ENCODE measurements at regions of chrX and their contacts with region 1.

Region 1: GRCh38 chrX:49269010-49269767 is 404 bp upstream of the PPP1R3F start:
- DNase-seq: peak; percentile 72 to 97 (median 94)
- ATAC-seq: peak; percentile 89
- H3K4me3 ChIP-seq: peak overlapping the region; percentile 96
- H3K4me3 Mint-ChIP-seq: peak overlapping the region; percentile 91 to 100 (median 96)
- H3K27ac ChIP-seq: peak overlapping the region; percentile 99
- H3K27ac Mint-ChIP-seq: peak overlapping the region; percentile 99 to 100 (median 99)
- H3K4me1 ChIP-seq: peaks cover 30 to 34% of the 10 kb centered on the region in 2 donors
- H3K4me1 Mint-ChIP-seq: peaks cover 17 to 51% (median 42%) of the 10 kb centered on the region in 7 donors
- H3K27me3 ChIP-seq: no peaks in the 10 kb centered on the region
- H3K27me3 Mint-ChIP-seq: no peaks in the 10 kb centered on the region

Region 2: DNA sequence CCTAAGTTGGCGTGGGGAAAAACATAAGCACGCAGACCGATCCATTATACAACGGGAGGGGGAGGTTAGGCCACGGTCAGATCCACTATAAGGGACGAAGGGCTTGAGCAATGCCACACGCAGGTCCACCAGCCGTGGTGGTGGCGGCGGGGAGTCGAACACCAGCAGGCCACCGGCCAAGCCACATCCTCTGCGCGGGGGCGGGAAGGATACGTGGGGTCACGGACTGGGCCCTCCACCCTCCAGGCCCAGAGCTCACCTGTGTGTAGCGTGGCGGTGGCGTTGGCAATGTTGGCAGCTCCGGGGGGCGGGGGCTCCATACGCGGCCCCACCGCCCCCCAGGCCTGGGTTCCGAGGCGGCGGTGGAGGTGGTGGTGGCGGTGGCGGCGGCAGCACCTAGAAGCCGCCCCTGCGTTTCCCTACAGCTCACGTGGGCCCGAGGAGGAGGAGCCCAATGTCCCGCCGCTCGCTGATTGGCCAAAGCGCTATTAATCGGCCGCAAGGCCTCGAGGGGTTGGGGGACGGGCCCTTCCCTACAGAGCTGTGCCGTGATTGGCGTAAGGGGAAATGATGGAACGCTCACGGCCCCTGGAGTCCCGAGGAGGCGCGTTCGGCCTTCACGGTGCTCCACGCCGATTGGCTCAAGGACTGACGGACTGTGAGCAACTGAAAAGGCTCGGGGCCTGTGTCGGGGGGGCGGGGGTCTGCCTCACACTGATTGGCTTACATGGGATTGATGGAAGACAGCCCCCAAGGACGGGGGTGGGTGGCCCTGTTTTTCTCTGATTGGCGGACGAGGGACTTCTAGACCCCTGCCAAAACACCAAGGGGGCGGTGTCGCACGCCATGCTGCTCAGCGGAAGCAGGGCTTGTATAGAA is 1618.8 kb before region 1 on chrX and contains the start of gene ELK1:
- CTCF ChIA-PET with region 1: no interaction called
- POLR2A ChIA-PET with region 1: no interaction called
- intact Hi-C with region 1: loop called in 1 of 2 experiments (anchors 10 kb)
- DNase-seq: peak; percentile 67 to 92 (median 88)
- ATAC-seq: peak; percentile 95
- H3K4me3 ChIP-seq: peak within 1 kb of the TSS; percentile 70
- H3K4me3 Mint-ChIP-seq: peak within 1 kb of the TSS; percentile 87 to 96 (median 90)
- H3K27ac ChIP-seq: peak within 1 kb of the TSS; percentile 85
- H3K27ac Mint-ChIP-seq: peak within 1 kb of the TSS; percentile 89 to 97 (median 95)
- H3K4me1 ChIP-seq: peaks cover 12 to 16% of the 10 kb centered on the region in 2 donors
- H3K4me1 Mint-ChIP-seq: peaks cover 35 to 52% (median 48%) of the 10 kb centered on the region in 7 donors
- H3K27me3 ChIP-seq: no peaks in the 10 kb centered on the region
- H3K27me3 Mint-ChIP-seq: no peaks in the 10 kb centered on the region
- total RNA-seq, gene ELK1: 29.3 to 62.4 (median 38.1) TPM

Region 3: DNA sequence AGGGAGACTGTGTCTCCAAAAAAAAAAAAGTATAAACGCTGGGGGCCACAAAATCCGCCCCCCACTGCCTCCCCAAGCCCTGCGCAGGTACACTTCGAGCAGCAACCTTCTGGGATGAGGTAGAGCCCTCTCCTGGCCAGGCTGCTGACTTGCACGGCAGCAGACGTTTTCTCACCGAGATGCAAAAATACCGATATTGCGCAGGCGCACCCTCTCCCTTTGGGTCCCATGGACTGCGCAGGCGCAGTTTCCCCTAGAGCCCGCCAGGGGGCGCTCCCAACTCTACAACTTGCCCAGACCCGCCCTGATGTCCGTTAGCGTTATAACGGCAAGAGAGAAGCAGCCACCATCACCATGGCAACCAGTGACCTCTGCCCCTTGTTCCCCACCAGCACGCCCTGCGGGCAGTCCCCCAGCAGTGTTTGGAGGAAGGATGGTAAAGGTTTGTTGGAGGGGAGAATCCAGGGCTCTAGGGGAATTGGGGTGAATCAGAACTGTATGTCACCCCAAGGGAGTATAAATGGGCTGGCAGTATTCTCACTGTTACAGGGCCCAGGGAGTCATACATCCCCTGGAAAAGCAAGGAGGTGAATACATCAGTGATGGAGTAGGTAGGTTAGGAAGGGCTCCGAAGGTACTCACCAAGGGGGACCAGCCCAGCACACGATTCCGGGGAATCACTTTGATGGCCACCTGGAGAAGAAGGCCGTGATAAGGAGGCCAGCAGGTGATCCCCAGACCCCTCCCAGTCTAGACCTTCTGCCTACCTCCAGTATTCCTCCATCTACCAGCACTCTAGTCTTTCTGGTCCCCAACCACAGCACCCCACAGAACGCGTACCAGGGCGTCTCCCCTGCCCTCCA is 351.8 kb before region 1 on chrX:
- CTCF ChIA-PET with region 1: no interaction called
- POLR2A ChIA-PET with region 1: no interaction called
- intact Hi-C with region 1: loop called in 1 of 2 experiments (anchors 5 kb)
- DNase-seq: peak; percentile 73 to 92 (median 88)
- ATAC-seq: peak; percentile 65
- H3K4me3 ChIP-seq: peak overlapping the region; percentile 75
- H3K4me3 Mint-ChIP-seq: peak overlapping the region; percentile 87 to 99 (median 96)
- H3K27ac ChIP-seq: peak overlapping the region; percentile 95
- H3K27ac Mint-ChIP-seq: peak overlapping the region; percentile 89 to 99 (median 96)
- H3K4me1 ChIP-seq: peaks cover 46 to 49% of the 10 kb centered on the region in 2 donors
- H3K4me1 Mint-ChIP-seq: peaks cover 11 to 82% (median 48%) of the 10 kb centered on the region in 7 donors
- H3K27me3 ChIP-seq: no peaks in the 10 kb centered on the region
- H3K27me3 Mint-ChIP-seq: peaks cover 0 to 5% (median 0%) of the 10 kb centered on the region in 5 donors

Region 4: DNA sequence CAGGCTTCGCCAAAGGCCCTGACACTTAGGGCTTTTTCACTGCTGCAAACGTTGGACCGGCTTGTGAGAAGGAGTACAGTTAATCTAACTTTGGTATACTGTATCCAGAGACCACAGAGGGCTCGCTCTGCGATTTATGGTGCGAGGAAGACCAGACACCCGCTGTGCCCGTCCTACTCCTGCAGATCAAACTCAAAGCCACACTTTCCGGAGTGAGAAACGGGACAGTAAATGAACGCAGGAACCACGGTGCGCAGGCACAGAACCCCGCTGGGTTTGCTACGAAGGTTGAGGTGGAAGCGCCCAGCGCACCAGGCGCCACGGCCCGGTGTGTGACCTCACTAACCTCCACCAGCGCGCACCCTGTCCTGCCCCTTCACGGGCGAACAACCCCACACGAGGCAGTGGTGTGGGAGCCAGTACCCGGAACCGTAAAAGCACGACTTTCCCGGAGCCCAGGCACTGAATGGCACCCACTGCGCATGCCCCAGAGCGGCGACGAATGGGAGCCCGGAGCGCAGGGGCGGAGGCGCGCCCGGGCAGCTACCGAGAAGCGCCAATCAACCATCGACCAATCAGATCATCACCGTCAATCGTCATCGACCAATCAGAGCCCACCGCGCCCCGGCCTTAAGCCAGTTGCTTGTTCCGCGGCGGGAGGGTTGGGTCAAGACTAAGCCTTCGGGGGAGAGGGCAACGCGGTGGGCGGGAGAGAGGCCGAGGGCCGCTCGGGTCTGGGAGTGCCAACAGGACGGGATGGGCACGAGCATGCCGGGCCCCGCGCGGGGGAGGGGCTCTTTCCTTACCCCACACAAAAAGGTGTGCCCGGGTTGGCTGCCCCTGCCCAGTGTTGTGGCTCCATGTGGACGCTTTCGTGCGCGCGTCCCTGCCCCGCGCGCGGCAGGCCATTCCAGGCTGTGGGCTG is 168.2 kb before region 1 on chrX:
- CTCF ChIA-PET with region 1: no interaction called
- POLR2A ChIA-PET with region 1: no interaction called
- intact Hi-C with region 1: loop called in 1 of 2 experiments (anchors 1 kb)
- DNase-seq: peak; percentile 75 to 90 (median 87)
- ATAC-seq: peak; percentile 97
- H3K4me3 ChIP-seq: peak overlapping the region; percentile 82
- H3K4me3 Mint-ChIP-seq: peak overlapping the region; percentile 80 to 93 (median 90)
- H3K27ac ChIP-seq: peak overlapping the region; percentile 78
- H3K27ac Mint-ChIP-seq: peak overlapping the region; percentile 74 to 95 (median 91)
- H3K4me1 ChIP-seq: no peaks in the 10 kb centered on the region
- H3K4me1 Mint-ChIP-seq: peaks cover 0 to 8% (median 0%) of the 10 kb centered on the region in 7 donors
- H3K27me3 ChIP-seq: no peaks in the 10 kb centered on the region
- H3K27me3 Mint-ChIP-seq: no peaks in the 10 kb centered on the region

Region 5: DNA sequence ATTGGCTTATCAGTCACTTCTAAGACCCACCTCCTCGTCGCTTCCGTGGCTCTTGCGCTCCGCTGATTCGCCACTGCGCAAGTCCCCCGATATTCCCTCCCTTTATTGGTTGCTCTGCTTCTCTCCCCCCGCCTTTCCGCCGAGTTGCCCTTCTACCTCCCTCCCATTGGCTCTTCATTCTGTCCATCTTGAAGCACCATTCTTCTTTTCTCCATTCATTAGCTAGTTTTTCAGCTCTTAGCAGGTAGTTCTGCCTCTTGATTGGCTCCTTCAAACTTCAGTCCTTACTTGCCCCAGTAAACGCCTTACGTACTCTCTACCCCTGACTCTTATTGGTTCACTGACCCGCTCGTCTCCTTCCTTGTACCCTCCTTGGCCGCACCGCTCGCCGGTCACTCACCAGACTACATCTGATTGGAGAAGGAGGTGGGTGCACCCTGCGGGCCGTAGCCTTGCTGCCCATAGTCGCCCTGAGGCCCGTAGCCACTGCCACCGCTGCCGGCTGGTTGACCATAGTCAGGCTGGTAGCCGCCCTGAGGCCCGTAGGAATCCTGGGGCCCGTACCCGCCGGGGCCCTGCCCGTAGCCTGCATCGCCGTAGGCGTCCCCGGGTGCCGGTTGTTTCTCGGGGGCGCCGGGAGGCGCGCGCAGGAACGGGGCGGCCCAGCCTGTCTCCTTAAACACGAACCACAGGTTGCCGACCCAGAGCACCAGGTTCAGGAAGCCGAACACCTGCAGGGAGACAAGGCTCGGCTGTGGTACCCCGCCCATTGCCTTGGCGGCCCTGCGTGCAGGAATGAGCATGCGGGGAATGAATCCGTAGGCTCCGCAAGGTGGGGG is 77.9 kb before region 1 on chrX:
- CTCF ChIA-PET with region 1: no interaction called
- POLR2A ChIA-PET with region 1: interaction called, 11 read pairs
- intact Hi-C with region 1: loop called (anchors 1 kb)
- DNase-seq: peak; percentile 43 to 95 (median 90)
- ATAC-seq: peak; percentile 92
- H3K4me3 ChIP-seq: peak overlapping the region; percentile 96
- H3K4me3 Mint-ChIP-seq: peak overlapping the region; percentile 86 to 95 (median 92)
- H3K27ac ChIP-seq: peak overlapping the region; percentile 82
- H3K27ac Mint-ChIP-seq: peak overlapping the region; percentile 77 to 98 (median 94)
- H3K4me1 ChIP-seq: peaks cover 0 to 15% of the 10 kb centered on the region in 2 donors
- H3K4me1 Mint-ChIP-seq: peaks cover 11 to 41% (median 26%) of the 10 kb centered on the region in 7 donors
- H3K27me3 ChIP-seq: no peaks in the 10 kb centered on the region
- H3K27me3 Mint-ChIP-seq: no peaks in the 10 kb centered on the region

Region 6: GRCh38 chrX:49257846-49258748 is 11.1 kb before region 1 on chrX:
- CTCF ChIA-PET with region 1: interaction called, 4 read pairs
- POLR2A ChIA-PET with region 1: interaction called, 30 read pairs
- intact Hi-C with region 1: loop called in 1 of 2 experiments (anchors 1 kb)
- DNase-seq: peak in 1 of 9 donors; percentile 13
- ATAC-seq: peak; percentile 49
- H3K4me3 ChIP-seq: peak overlapping the region; percentile 9
- H3K4me3 Mint-ChIP-seq: peak overlapping the region; percentile 36 to 74 (median 49)
- H3K27ac ChIP-seq: peak overlapping the region; percentile 52
- H3K27ac Mint-ChIP-seq: peak overlapping the region; percentile 26 to 81 (median 74)
- H3K4me1 ChIP-seq: peaks cover 15 to 38% of the 10 kb centered on the region in 2 donors
- H3K4me1 Mint-ChIP-seq: peaks cover 5 to 39% (median 29%) of the 10 kb centered on the region in 7 donors
- H3K27me3 ChIP-seq: no peaks in the 10 kb centered on the region
- H3K27me3 Mint-ChIP-seq: no peaks in the 10 kb centered on the region